ENCODE measurements at regions of chr20 and their contacts with region 1.

Region 1: GRCh38 chr20:38633577-38634093 is 32.0 kb downstream of the ARHGAP40 start:
- DNase-seq: peak; percentile 47
- H3K4me3 ChIP-seq: no peak overlapping the region
- H3K27ac ChIP-seq: no peak overlapping the region
- H3K4me1 ChIP-seq: no peaks in the 10 kb centered on the region
- H3K27me3 ChIP-seq: peaks cover 0 to 2% of the 10 kb centered on the region in 2 experiments
- CTCF ChIP-seq: peak; percentile 89 to 94
- POLR2A ChIP-seq: no peak

Region 2: GRCh38 chr20:38355151-38356012 is 278.3 kb before region 1 on chr20:
- CTCF ChIA-PET with region 1: no interaction called
- POLR2A ChIA-PET with region 1: no interaction called
- dilution Hi-C with region 1: no loop called
- intact Hi-C with region 1: no loop called
- DNase-seq: no peak
- H3K4me3 ChIP-seq: no peak overlapping the region
- H3K27ac ChIP-seq: no peak overlapping the region
- H3K4me1 ChIP-seq: no peaks in the 10 kb centered on the region
- H3K27me3 ChIP-seq: no peaks in the 10 kb centered on the region
- CTCF ChIP-seq: no peak
- POLR2A ChIP-seq: no peak

Region 3: DNA sequence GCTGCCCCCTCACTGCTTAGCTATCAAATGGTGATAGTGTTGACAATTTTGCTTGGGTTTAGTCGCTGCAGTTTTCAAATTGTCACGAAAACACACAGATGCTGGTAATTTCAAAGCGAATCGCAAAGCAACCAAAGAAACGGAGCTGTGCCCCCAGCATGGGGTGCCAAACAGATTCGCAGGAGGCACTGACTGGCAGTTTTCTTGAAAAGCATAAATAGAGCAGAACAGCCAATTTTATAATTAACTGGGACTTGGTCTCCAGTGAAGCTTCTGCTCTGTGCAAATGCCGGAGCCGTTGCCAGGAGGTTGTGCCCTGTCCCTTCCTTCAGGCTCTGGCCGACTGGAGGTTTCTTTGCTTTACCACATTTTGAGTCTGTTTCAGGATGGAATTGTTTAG is 13.2 kb before region 1 on chr20:
- CTCF ChIA-PET with region 1: interaction called, 12 read pairs
- POLR2A ChIA-PET with region 1: no interaction called
- dilution Hi-C with region 1: no loop called
- intact Hi-C with region 1: no loop called
- DNase-seq: no peak
- H3K4me3 ChIP-seq: no peak overlapping the region
- H3K27ac ChIP-seq: no peak overlapping the region
- H3K4me1 ChIP-seq: no peaks in the 10 kb centered on the region
- H3K27me3 ChIP-seq: peaks cover 14 to 15% of the 10 kb centered on the region in 2 experiments
- CTCF ChIP-seq: no peak
- POLR2A ChIP-seq: no peak